Right lobe of liver (tissue), 6 donors: ENCODE measurements at regions of chr10 and their contacts with region 1.

Region 1: DNA sequence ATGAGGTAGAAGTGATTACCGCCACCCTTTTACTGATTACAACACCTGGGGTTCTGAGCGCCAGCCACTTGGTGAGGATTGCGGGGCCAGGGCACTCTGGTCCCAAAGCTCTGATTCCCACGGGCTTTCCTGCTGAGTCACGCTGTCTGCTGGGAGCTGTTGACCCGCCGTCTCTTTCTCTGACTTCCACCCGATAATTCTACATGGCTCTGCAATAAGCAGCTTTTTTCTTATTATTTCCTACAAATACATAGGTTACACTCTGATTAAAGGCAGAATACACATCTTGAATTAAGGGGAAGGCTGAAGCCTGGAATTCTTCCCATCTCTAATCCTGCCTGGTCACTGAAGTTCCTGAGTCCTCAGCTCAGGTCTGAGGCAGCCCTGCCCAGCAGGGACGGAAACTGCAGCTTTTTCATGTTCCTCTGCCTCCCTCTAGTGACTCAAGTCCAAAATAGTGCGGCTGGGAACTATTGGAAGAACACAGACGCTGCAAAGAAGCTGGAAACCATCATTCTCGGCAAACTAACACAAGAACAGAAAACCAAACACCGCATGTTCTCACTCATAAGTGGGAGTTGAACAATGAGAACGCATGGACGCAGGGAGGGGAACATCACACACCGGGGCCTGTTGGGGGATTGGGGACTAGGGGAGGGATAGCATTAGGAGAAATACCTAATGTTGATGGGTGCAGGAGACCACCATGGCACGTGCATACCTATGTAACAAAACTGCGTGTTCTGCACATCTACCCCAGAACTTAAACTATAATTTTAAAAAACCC is 178.3 kb downstream of the PRKCQ start:
- DNase-seq: peak; percentile 83 to 88 (median 87)
- ATAC-seq: peak; percentile 91 to 96 (median 94)
- H3K4me3 ChIP-seq: peak overlapping the region; percentile 17 to 46 (median 40)
- H3K27ac ChIP-seq: peak overlapping the region in 2 of 3 donors; percentile 14 to 49
- H3K4me1 ChIP-seq: peaks cover 0 to 7% (median 3%) of the 10 kb centered on the region in 4 donors
- H3K27me3 ChIP-seq: no peaks in the 10 kb centered on the region
- CTCF ChIP-seq: peak; percentile 67 to 88 (median 70)
- POLR2A ChIP-seq: no peak

Region 2: GRCh38 chr10:6108603-6109443 is 292.9 kb before region 1 on chr10:
- intact Hi-C with region 1: loop called (anchors 5 to 10 kb)
- DNase-seq: no peak
- ATAC-seq: peak; percentile 71 to 83 (median 78)
- H3K4me3 ChIP-seq: no peak overlapping the region
- H3K27ac ChIP-seq: no peak overlapping the region
- H3K4me1 ChIP-seq: no peaks in the 10 kb centered on the region
- H3K27me3 ChIP-seq: no peaks in the 10 kb centered on the region
- CTCF ChIP-seq: peak; percentile 70 to 79 (median 72)
- POLR2A ChIP-seq: no peak

Region 3: DNA sequence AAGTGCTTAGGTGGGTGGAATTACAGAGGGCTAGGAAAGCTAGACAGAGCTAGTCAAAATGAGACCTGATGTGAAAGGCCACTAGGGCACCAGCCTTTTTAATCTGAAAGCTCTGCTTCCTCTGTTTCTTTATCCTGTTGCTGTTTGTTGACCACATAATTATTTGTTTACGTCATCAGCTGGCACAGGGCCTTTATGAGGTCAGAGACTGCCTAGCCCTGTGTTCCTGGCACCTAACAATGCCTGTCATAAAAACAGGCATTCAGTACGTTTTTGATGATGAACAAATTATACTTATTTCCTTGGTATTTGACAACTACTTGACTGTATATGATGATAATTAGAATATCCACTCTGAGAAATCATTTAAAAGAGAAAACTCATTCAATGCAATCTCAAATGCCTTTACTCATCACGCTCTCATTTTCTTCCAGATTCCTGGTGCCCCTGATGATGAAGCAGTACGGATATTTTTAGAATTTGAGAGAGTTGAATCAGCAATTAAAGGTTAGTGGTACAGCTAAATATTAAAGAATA is 286.9 kb before region 1 on chr10:
- intact Hi-C with region 1: loop called in 1 of 2 experiments (anchors 5 kb)
- DNase-seq: no peak
- ATAC-seq: peak; percentile 44 to 89 (median 79)
- H3K4me3 ChIP-seq: no peak overlapping the region
- H3K27ac ChIP-seq: peak overlapping the region; percentile 2 to 9 (median 7)
- H3K4me1 ChIP-seq: peaks cover 0 to 4% (median 0%) of the 10 kb centered on the region in 4 donors
- H3K27me3 ChIP-seq: no peaks in the 10 kb centered on the region
- CTCF ChIP-seq: no peak
- POLR2A ChIP-seq: no peak

Region 4: DNA sequence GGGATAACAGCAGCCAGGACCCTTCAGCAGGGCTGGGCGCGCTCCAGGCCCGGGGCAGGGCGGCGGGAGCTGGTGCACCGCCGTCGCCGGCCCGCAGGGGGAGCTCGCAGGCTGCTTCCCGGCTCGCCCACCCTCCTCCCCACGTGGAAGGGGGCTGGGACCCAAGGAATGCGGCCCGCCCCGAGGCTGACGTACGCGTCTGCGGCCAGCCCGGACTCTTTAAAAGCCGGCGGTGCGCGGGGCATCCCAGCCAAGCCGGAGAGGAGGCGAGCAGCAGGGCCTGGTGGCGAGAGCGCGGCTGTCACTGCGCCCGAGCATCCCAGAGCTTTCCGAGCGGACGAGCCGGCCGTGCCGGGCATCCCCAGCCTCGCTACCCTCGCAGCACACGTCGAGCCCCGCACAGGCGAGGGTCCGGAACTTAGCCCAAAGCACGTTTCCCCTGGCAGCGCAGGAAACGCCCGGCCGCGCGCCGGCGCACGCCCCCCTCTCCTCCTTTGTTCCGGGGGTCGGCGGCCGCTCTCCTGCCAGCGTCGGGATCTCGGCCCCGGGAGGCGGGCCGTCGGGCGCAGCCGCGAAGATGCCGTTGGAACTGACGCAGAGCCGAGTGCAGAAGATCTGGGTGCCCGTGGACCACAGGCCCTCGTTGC is 198.9 kb before region 1 on chr10 and contains the start of gene PFKFB3:
- intact Hi-C with region 1: loop called (anchors 5 kb)
- DNase-seq: peak; percentile 96 to 98 (median 97)
- ATAC-seq: peak; percentile 81 to 87 (median 84)
- H3K4me3 ChIP-seq: peak within 1 kb of the TSS; percentile 61 to 88 (median 84)
- H3K27ac ChIP-seq: peak within 1 kb of the TSS; percentile 72 to 93 (median 85)
- H3K4me1 ChIP-seq: peaks cover 0 to 51% (median 10%) of the 10 kb centered on the region in 4 donors
- H3K27me3 ChIP-seq: no peaks in the 10 kb centered on the region
- CTCF ChIP-seq: peak in 3 of 4 donors; percentile 98 to 99 (median 99)
- POLR2A ChIP-seq: peak; percentile 99
- total RNA-seq, gene PFKFB3: 6.8 to 57.8 (median 20.8) TPM

Region 5: GRCh38 chr10:6464862-6465430 is 63.2 kb after region 1 on chr10:
- intact Hi-C with region 1: no loop called
- DNase-seq: no peak
- ATAC-seq: no peak
- H3K4me3 ChIP-seq: no peak overlapping the region
- H3K27ac ChIP-seq: no peak overlapping the region
- H3K4me1 ChIP-seq: no peaks in the 10 kb centered on the region
- H3K27me3 ChIP-seq: no peaks in the 10 kb centered on the region
- CTCF ChIP-seq: no peak
- POLR2A ChIP-seq: no peak